Transverse colon (tissue), 4 donors: ENCODE measurements at regions of chr10 and their contacts with region 1.

Region 1: DNA sequence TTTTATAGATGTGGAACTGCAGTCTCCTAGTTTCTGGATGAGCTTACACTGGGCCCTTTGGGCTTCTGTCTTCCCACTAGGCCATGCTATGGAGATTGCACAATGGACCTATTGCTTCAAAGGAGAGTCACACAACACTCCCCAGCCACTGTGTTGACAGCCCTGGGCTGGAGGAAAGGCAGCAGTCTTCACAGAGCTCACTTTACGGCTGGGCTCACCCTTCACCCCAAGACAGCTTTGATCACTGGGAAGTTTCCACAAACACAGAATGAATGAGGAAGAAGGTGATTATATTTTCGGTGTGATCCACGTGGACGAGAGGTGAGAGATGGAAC is 92.7 kb upstream of the GDF10 start:
- DNase-seq: no peak
- H3K4me3 ChIP-seq: no peak overlapping the region
- H3K27ac ChIP-seq: no peak overlapping the region
- H3K4me1 ChIP-seq: no peaks in the 10 kb centered on the region
- H3K27me3 ChIP-seq: no peaks in the 10 kb centered on the region
- CTCF ChIP-seq: no peak
- EP300 ChIP-seq: no peak
- POLR2A ChIP-seq: no peak

Region 2: DNA sequence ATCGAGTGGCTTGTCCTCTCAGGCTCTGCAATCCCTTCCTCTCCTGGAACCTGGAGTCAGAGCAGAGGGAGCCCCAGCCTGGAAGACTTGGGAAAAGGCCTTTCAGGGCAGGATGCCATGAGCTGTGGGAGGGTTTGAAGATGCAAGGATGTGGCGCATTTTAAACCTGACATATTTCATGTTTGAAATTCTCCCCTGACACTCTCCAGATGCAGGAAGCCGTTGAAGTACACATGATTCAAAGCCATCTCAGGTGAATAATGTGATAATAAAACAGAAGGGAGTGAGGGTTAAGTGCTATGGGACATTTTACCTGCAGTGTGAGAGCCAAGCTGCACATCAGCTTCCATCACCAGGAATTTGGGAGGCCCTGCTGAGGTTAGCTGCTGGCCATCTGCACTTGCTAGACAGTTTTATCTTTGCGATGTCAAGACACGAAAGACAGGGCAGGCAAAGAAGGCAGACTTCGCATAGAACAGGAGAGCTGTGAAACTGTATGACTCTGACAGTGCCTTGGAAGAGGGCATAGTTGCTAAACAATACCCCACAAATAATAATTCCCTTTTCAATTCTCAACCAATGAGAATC is 66.4 kb before region 1 on chr10:
- in situ Hi-C with region 1: no loop called
- intact Hi-C with region 1: loop called (anchors 2 kb)
- DNase-seq: no peak
- H3K4me3 ChIP-seq: no peak overlapping the region
- H3K27ac ChIP-seq: no peak overlapping the region
- H3K4me1 ChIP-seq: no peaks in the 10 kb centered on the region
- H3K27me3 ChIP-seq: no peaks in the 10 kb centered on the region
- CTCF ChIP-seq: no peak
- EP300 ChIP-seq: no peak
- POLR2A ChIP-seq: no peak

Region 3: DNA sequence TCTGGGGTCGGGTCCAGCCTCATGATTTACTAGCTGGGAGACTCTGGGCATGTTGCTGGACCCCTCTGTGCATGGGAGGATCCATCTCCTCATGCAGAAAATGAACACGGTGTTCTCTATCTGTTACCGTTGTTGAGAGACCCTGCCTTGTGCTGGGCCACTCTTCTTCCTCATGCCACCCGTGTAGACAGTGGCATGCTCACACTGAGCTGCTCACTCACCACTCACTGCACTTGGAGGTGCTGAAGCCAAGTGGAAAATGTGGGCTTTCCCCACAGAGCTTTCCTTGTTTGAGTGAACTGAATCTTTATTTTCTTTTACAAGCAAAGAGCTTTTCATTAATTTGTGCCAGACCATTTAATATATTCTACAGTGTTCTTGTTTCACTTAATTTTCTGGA is 15.2 kb after region 1 on chr10:
- in situ Hi-C with region 1: no loop called
- intact Hi-C with region 1: no loop called
- DNase-seq: no peak
- H3K4me3 ChIP-seq: no peak overlapping the region
- H3K27ac ChIP-seq: no peak overlapping the region
- H3K4me1 ChIP-seq: no peaks in the 10 kb centered on the region
- H3K27me3 ChIP-seq: no peaks in the 10 kb centered on the region
- CTCF ChIP-seq: no peak
- EP300 ChIP-seq: no peak
- POLR2A ChIP-seq: no peak

Region 4: DNA sequence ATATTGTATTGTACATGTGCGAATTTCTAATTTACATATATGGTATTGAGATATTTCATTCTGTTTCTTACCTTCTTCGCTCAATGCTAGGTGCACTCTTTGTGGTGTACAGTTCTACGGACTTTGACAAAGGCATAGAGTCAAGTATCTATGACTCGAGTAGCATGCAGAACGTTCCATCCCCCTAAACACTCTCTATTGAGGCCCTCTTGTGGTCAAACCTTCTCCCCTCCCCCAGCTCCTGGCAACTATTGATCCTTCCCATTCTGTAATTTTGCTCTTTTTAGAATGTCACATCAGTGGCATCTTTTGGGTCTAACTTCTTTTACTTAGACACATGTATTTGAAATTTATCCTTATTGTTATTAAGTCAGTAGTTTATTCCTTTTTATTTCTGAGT is 62.0 kb after region 1 on chr10:
- in situ Hi-C with region 1: no loop called
- intact Hi-C with region 1: no loop called
- DNase-seq: no peak
- H3K4me3 ChIP-seq: no peak overlapping the region
- H3K27ac ChIP-seq: no peak overlapping the region
- H3K4me1 ChIP-seq: no peaks in the 10 kb centered on the region
- H3K27me3 ChIP-seq: no peaks in the 10 kb centered on the region
- CTCF ChIP-seq: no peak
- EP300 ChIP-seq: no peak
- POLR2A ChIP-seq: no peak